Breast epithelium (tissue), 4 donors: ENCODE measurements at regions of chr2 and their contacts with region 1.

Region 1: GRCh38 chr2:118237451-118237850 is 149.2 kb downstream of the INSIG2 start:
- DNase-seq: no peak
- H3K4me3 ChIP-seq: no peak overlapping the region
- H3K27ac ChIP-seq: no peak overlapping the region
- H3K4me1 ChIP-seq: no peaks in the 10 kb centered on the region
- H3K27me3 ChIP-seq: peaks cover 0 to 14% of the 10 kb centered on the region in 2 donors
- CTCF ChIP-seq: no peak
- POLR2A ChIP-seq: no peak

Region 2: DNA sequence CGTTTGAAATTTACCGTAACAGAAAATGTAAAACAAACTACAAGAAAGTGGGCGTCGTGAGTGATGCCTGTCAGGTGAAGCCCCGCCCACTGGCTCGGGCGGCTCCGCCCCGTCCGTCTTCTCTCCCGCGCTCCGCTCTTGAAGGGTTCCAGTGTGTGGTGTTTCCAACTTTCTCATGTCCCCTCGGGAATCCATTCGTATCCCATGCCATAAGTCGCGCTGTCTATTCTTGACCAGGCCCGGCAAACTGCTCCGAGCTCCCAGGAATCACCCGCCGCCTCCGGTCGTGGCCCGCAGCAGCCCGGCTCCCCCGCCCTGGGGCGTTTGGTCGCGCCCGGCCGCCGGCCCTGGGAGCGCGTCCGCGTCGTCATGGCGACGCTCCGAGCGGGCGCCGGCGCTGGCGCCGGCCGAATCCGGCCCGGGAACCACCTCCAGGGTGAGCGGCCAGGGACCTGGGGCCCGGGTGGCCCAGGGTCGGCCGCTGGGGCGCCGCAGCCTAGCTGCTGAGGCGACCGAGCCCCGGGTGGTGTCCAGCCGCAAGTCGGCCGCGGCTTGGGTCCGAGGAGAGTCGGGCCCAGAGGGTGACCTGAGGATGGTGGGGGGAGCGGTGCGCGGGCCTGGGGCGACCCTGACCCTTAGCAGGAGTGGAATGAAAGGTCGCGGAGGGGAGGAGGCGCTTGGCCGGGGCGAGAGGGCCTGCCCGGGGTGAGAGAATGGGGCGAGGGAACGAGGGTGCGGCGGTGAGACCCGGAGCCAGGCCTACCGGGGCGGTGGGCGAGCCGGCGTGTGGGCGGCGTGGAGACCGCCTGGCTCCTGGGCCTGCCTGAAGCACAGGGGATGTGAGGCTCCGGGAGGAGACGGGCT is 1306.9 kb after region 1 on chr2 and contains the start of gene CFAP221:
- intact Hi-C with region 1: loop called (anchors 5 kb)
- DNase-seq: peak; percentile 28 to 60
- H3K4me3 ChIP-seq: peak within 1 kb of the TSS; percentile 39 to 65 (median 52)
- H3K27ac ChIP-seq: no peak within 1 kb of the TSS
- H3K4me1 ChIP-seq: no peaks in the 10 kb centered on the region
- H3K27me3 ChIP-seq: peaks cover 0 to 13% of the 10 kb centered on the region in 2 donors
- CTCF ChIP-seq: no peak
- POLR2A ChIP-seq: no peak
- total RNA-seq, gene CFAP221: 0.98 to 3.5 TPM in 2 of 3 donors, not detected in the other